GM12878 (cell line): ENCODE measurements at regions of chr1 and their contacts with region 1.

Region 1: GRCh38 chr1:35451125-35451528 is 106.1 kb downstream of the KIAA0319L start:
- DNase-seq: no peak
- ATAC-seq: peak; percentile 99
- H3K4me3 ChIP-seq: no peak overlapping the region
- H3K27ac ChIP-seq: no peak overlapping the region
- H3K4me1 ChIP-seq: no peaks in the 10 kb centered on the region
- H3K27me3 ChIP-seq: no peaks in the 10 kb centered on the region
- CTCF ChIP-seq: peak; percentile 87 to 90 (median 88)
- EP300 ChIP-seq: no peak
- POLR2A ChIP-seq: no peak
- RAD21 ChIP-seq: peak; percentile 97

Region 2: GRCh38 chr1:35202048-35202719 is 248.9 kb before region 1 on chr1:
- CTCF ChIA-PET with region 1: interaction called, 19 read pairs
- POLR2A ChIA-PET with region 1: no interaction called
- RAD21 ChIA-PET with region 1: interaction called, 5 read pairs
- SMC1A ChIA-PET with region 1: interaction called, 4 read pairs
- in situ Hi-C with region 1: no loop called
- intact Hi-C with region 1: no loop called
- DNase-seq: peak; percentile 40
- ATAC-seq: peak; percentile 100
- H3K4me3 ChIP-seq: no peak overlapping the region
- H3K27ac ChIP-seq: no peak overlapping the region
- H3K4me1 ChIP-seq: no peaks in the 10 kb centered on the region
- H3K27me3 ChIP-seq: no peaks in the 10 kb centered on the region
- CTCF ChIP-seq: peak; percentile 92 to 93 (median 92); a peak in 5 of 6 replicates
- EP300 ChIP-seq: no peak
- POLR2A ChIP-seq: no peak
- RAD21 ChIP-seq: peak; percentile 87

Region 3: DNA sequence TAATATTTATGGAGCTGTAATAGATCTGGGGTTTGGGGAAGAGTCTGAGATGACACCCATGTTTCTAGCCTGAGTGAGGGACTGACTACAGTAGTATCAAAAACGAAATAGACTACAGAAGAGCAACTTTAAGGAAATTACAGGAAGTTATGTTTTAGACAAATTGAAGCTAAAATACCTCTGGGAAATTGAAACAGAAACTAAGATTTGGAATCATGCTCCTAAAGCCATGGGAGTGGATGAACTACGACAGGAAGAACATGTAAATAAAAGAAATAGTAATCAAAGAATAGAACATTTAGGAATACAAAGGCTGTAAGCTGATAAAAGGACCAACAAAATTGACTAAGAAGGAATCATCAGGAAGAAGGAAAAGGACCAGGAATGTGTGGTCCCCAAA is 37.2 kb after region 1 on chr1:
- CTCF ChIA-PET with region 1: interaction called, 16 read pairs
- POLR2A ChIA-PET with region 1: interaction called, 7 read pairs
- RAD21 ChIA-PET with region 1: interaction called, 6 read pairs
- SMC1A ChIA-PET with region 1: interaction called, 19 read pairs
- in situ Hi-C with region 1: no loop called
- intact Hi-C with region 1: no loop called
- DNase-seq: no peak
- ATAC-seq: no peak
- H3K4me3 ChIP-seq: no peak overlapping the region
- H3K27ac ChIP-seq: no peak overlapping the region
- H3K4me1 ChIP-seq: 0 out of 2 replicates have a peak, but pooled peaks cover 3% of the 10 kb centered on the region
- H3K27me3 ChIP-seq: no peaks in the 10 kb centered on the region
- CTCF ChIP-seq: no peak
- EP300 ChIP-seq: no peak
- POLR2A ChIP-seq: no peak
- RAD21 ChIP-seq: no peak

Region 4: DNA sequence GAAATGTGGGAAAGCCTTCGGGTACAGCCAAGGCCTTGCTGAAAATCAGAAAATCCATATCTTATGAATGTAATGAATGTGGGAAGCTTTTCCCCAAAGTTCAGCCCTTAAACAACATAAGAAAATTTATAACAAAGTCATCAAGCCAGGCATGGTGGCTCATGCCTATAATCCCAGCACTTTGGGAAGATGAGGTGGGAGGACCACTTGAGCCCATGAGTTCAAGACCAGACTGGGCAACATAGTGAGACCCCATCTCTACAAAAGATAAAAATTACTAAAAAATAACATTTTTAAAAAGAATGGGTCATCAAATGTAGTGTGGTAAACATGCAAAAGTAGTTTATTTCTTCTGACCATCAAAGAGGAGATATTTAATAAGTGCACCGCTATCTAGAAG is 60.2 kb after region 1 on chr1:
- CTCF ChIA-PET with region 1: interaction called, 34 read pairs
- POLR2A ChIA-PET with region 1: no interaction called
- RAD21 ChIA-PET with region 1: interaction called, 28 read pairs
- SMC1A ChIA-PET with region 1: interaction called, 44 read pairs
- in situ Hi-C with region 1: no loop called
- intact Hi-C with region 1: loop called (anchors 2 kb)
- DNase-seq: no peak
- ATAC-seq: no peak
- H3K4me3 ChIP-seq: no peak overlapping the region
- H3K27ac ChIP-seq: no peak overlapping the region
- H3K4me1 ChIP-seq: peaks cover 31% of the 10 kb centered on the region
- H3K27me3 ChIP-seq: no peaks in the 10 kb centered on the region
- CTCF ChIP-seq: no peak
- EP300 ChIP-seq: no peak
- POLR2A ChIP-seq: no peak
- RAD21 ChIP-seq: no peak

Region 5: DNA sequence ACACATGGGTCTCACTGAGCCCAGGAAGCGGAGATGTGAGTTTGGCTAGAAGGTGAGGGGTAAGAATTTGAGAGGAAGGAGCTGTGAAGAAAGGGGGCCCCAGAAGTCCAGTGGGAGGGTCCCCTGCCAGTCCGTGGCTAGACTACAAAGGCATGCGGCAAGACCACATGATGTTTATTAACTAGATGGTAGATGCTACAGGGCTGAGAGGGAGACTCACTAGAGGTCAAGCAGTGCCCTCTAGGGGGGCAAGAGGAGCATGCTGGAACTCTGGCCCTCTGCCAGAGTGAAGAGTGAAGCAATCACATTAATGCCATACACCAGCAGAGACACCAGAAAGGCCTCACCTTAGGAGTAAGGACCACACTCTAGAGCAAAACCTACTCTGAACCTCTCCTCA is 93.9 kb after region 1 on chr1:
- CTCF ChIA-PET with region 1: interaction called, 260 read pairs
- POLR2A ChIA-PET with region 1: interaction called, 7 read pairs
- RAD21 ChIA-PET with region 1: interaction called, 139 read pairs
- SMC1A ChIA-PET with region 1: interaction called, 254 read pairs
- in situ Hi-C with region 1: no loop called
- intact Hi-C with region 1: loop called (anchors 1 kb)
- DNase-seq: peak; percentile 50
- ATAC-seq: peak; percentile 98
- H3K4me3 ChIP-seq: no peak overlapping the region
- H3K27ac ChIP-seq: no peak overlapping the region
- H3K4me1 ChIP-seq: peaks cover 5% of the 10 kb centered on the region; the same call in 1 of the 2 replicates
- H3K27me3 ChIP-seq: no peaks in the 10 kb centered on the region
- CTCF ChIP-seq: peak; percentile 64 to 89 (median 76)
- EP300 ChIP-seq: no peak
- POLR2A ChIP-seq: no peak
- RAD21 ChIP-seq: peak; percentile 73

Region 6: DNA sequence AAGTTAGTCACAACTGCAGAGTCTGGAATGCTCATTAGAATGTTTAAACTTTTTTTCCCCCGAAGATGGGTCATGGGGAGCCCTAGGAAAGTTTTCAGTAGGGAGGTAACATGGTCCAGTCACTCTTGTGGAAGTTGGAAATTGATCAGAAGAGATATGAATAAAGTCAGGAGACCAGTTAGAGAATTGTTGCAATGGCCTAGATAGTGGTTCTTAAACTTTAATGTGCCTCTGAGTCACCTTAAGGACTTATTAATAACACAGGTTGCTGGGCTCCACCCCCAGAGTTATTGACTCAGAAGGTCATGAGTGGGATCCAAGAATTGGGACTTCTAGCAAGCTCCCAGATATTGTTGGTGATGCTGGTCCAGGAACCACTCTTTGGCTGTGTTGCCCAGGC is 118.8 kb after region 1 on chr1:
- CTCF ChIA-PET with region 1: interaction called, 248 read pairs
- POLR2A ChIA-PET with region 1: interaction called, 6 read pairs
- RAD21 ChIA-PET with region 1: interaction called, 128 read pairs
- SMC1A ChIA-PET with region 1: interaction called, 128 read pairs
- in situ Hi-C with region 1: no loop called
- intact Hi-C with region 1: no loop called
- DNase-seq: no peak
- ATAC-seq: no peak
- H3K4me3 ChIP-seq: no peak overlapping the region
- H3K27ac ChIP-seq: no peak overlapping the region
- H3K4me1 ChIP-seq: no peaks in the 10 kb centered on the region
- H3K27me3 ChIP-seq: peaks cover 0 to 2% of the 10 kb centered on the region in 2 experiments; a peak in 1 of 4 replicates
- CTCF ChIP-seq: no peak
- EP300 ChIP-seq: no peak
- POLR2A ChIP-seq: no peak
- RAD21 ChIP-seq: no peak

Region 7: GRCh38 chr1:35726450-35727433 is 275.6 kb after region 1 on chr1:
- CTCF ChIA-PET with region 1: interaction called, 26 read pairs
- POLR2A ChIA-PET with region 1: no interaction called
- RAD21 ChIA-PET with region 1: interaction called, 7 read pairs
- SMC1A ChIA-PET with region 1: no interaction called
- in situ Hi-C with region 1: loop called (anchors 5 kb)
- intact Hi-C with region 1: no loop called
- DNase-seq: no peak
- ATAC-seq: peak; percentile 94
- H3K4me3 ChIP-seq: no peak overlapping the region
- H3K27ac ChIP-seq: no peak overlapping the region
- H3K4me1 ChIP-seq: no peaks in the 10 kb centered on the region
- H3K27me3 ChIP-seq: no peaks in the 10 kb centered on the region
- CTCF ChIP-seq: peak; percentile 81 to 85 (median 84)
- EP300 ChIP-seq: no peak
- POLR2A ChIP-seq: no peak
- RAD21 ChIP-seq: peak; percentile 77

Region 8: DNA sequence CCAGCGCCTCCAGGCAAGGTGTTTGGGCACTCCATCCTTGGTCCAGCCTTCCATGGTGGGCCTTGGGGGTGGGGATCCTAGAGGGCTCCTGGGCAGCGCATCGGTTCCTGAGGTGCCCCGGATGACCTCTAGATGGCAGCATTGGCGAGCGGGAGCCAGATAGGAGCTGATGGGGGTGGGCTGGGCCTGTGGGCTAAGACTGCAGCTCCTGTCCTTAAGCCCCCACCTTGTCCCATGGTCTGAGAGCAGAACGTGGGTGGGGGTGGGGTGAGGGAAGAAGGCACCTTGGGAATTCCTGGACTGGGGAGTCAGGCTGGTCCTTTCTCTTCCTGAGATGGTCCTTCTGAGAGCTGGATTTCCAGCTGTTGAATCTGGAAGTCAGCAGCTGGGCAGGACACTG is 1125.0 kb after region 1 on chr1:
- CTCF ChIA-PET with region 1: no interaction called
- POLR2A ChIA-PET with region 1: no interaction called
- RAD21 ChIA-PET with region 1: no interaction called
- SMC1A ChIA-PET with region 1: no interaction called
- in situ Hi-C with region 1: no loop called
- intact Hi-C with region 1: no loop called
- DNase-seq: no peak
- ATAC-seq: peak; percentile 97
- H3K4me3 ChIP-seq: no peak overlapping the region
- H3K27ac ChIP-seq: no peak overlapping the region
- H3K4me1 ChIP-seq: no peaks in the 10 kb centered on the region
- H3K27me3 ChIP-seq: peaks cover 0 to 4% of the 10 kb centered on the region in 2 experiments; a peak in 3 of 4 replicates
- CTCF ChIP-seq: peak; percentile 86 to 95 (median 86)
- EP300 ChIP-seq: no peak
- POLR2A ChIP-seq: no peak
- RAD21 ChIP-seq: peak; percentile 74